Ascending aorta (tissue), 2 donors: ENCODE measurements at regions of chr14 and their contacts with region 1.

Region 1: GRCh38 chr14:54396493-54397335 is at the start of gene CDKN3:
- DNase-seq: peak; percentile 98 to 99
- H3K4me3 ChIP-seq: peak within 1 kb of the TSS; percentile 72 to 76
- H3K27ac ChIP-seq: peak within 1 kb of the TSS in 1 of 2 donors; percentile 24
- H3K4me1 ChIP-seq: peaks cover 5 to 12% of the 10 kb centered on the region in 2 donors
- H3K27me3 ChIP-seq: no peaks in the 10 kb centered on the region
- CTCF ChIP-seq: peak in 2 of 3 experiments; percentile 52 to 58
- total RNA-seq, gene CDKN3: not detected

Region 2: GRCh38 chr14:54440873-54441868 is 44.5 kb after region 1 on chr14 and contains the start of gene CNIH1:
- intact Hi-C with region 1: loop called (anchors 1 kb)
- DNase-seq: peak; percentile 44 to 94
- H3K4me3 ChIP-seq: peak within 1 kb of the TSS; percentile 66 to 82
- H3K27ac ChIP-seq: peak within 1 kb of the TSS; percentile 82 to 94
- H3K4me1 ChIP-seq: peaks cover 0 to 5% of the 10 kb centered on the region in 2 donors
- H3K27me3 ChIP-seq: no peaks in the 10 kb centered on the region
- CTCF ChIP-seq: peak; percentile 89 to 97 (median 95)
- total RNA-seq, gene CNIH1: 173 TPM

Region 3: DNA sequence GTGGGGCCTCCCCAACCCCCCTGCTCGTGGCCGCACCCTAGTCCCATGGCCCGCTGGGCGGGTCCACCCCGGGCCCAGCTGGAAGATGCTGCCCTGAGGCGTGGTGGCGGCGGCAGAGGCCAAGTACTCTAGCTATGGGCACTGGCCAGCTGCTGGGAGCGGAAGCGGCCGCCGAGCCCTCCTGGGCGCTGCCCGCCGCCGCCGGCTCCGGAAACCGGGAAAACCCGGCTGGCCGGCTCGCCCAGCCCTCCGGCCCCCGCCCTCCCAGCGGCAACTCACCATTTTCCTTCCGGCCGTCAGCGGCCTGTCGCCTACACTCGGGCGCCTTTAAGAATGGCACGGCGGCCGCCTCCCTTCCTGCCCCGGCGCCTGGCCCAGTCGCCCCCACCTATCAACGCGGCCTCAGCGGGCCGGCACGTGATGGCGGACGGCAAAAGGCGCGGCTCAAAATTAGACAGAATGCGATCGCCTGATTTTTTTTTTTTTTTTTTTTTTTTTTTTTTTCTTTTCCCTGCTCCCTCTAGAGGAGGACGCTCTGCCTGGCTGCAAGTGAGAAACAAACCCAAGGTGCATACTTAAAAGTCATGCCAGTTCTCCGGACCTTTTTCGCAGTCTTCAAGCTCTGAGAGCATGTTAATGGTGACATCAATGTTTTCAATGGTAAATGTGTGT is 92.1 kb after region 1 on chr14 and contains the start of gene GMFB:
- intact Hi-C with region 1: loop called (anchors 1 kb)
- DNase-seq: peak; percentile 74 to 95
- H3K4me3 ChIP-seq: peak within 1 kb of the TSS; percentile 74 to 84
- H3K27ac ChIP-seq: peak within 1 kb of the TSS; percentile 96 to 99
- H3K4me1 ChIP-seq: peaks cover 0 to 22% of the 10 kb centered on the region in 2 donors
- H3K27me3 ChIP-seq: no peaks in the 10 kb centered on the region
- CTCF ChIP-seq: peak in 2 of 3 experiments; percentile 33 to 45
- total RNA-seq, gene GMFB: 27.5 TPM

Region 4: GRCh38 chr14:54509546-54510501 is 113.1 kb after region 1 on chr14 and contains the start of gene CGRRF1:
- intact Hi-C with region 1: loop called (anchors 1 kb)
- DNase-seq: peak; percentile 93 to 99
- H3K4me3 ChIP-seq: peak within 1 kb of the TSS; percentile 91 to 95
- H3K27ac ChIP-seq: peak within 1 kb of the TSS; percentile 88
- H3K4me1 ChIP-seq: peaks cover 0 to 15% of the 10 kb centered on the region in 2 donors
- H3K27me3 ChIP-seq: no peaks in the 10 kb centered on the region
- CTCF ChIP-seq: peak; percentile 44 to 64 (median 54)
- total RNA-seq, gene CGRRF1: 1.2 TPM